A549 (cell line): ENCODE measurements at regions of chr4 and their contacts with region 1.

Region 1: DNA sequence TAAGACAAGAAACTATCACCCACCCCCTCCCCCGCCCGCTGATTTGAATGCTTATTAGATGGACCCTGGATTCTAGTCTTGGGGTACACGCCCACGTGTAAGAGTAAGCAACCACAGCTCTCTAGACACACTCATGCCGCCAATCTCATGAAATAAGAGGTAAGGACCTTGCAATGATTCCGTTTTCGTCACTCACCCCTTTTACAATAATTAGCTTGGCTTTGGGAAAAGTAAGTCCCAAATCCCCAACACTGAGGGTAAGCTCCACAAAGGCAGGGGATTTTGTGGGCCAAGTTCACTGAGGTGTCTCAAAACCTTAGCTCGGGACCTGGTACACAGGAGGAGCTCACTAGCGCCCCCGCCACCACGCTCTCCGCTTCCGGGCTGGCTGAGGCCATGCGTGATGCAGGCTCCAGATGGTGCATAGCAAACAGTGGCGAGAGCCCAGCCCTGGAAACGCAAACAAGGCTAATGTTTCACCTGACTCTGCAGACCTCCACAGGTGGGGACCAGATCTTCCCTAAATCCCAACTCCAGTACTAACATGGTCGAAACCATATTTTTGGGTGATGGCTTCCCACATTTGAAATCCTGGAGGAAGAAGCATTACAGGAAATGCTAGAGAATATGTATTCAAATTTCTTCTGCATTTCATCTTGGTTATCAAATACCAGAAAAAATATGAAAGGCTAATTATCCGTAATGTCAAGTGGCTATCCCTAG is 4.1 kb downstream of the PLAC8 start:
- DNase-seq: peak; percentile 56 to 90
- ATAC-seq: peak; percentile 95 to 97
- H3K4me3 ChIP-seq: peak overlapping the region; percentile 64
- H3K27ac ChIP-seq: peak overlapping the region; percentile 89 to 94
- H3K4me1 ChIP-seq: peaks cover 17% of the 10 kb centered on the region
- CTCF ChIP-seq: peak; percentile 61
- EP300 ChIP-seq: no peak
- POLR2A ChIP-seq: no peak
- RAD21 ChIP-seq: peak; percentile 47 to 54

Region 2: GRCh38 chr4:83097018-83097417 is 13.4 kb before region 1 on chr4:
- CTCF ChIA-PET with region 1: interaction called, 14 read pairs
- POLR2A ChIA-PET with region 1: no interaction called
- DNase-seq: no peak
- ATAC-seq: no peak
- H3K4me3 ChIP-seq: no peak overlapping the region
- H3K27ac ChIP-seq: no peak overlapping the region
- H3K4me1 ChIP-seq: peaks cover 14% of the 10 kb centered on the region; the same call in 2 of the 3 replicates
- CTCF ChIP-seq: no peak
- EP300 ChIP-seq: no peak
- POLR2A ChIP-seq: no peak
- RAD21 ChIP-seq: no peak

Region 3: GRCh38 chr4:83356899-83357661 is 246.7 kb after region 1 on chr4:
- CTCF ChIA-PET with region 1: no interaction called
- POLR2A ChIA-PET with region 1: no interaction called
- DNase-seq: peak in 1 of 2 experiments; percentile 45
- ATAC-seq: peak; percentile 54 to 73; a peak in 4 of 6 replicates
- H3K4me3 ChIP-seq: no peak overlapping the region
- H3K27ac ChIP-seq: peak overlapping the region; percentile 52 to 75; a peak in 5 of 6 replicates
- H3K4me1 ChIP-seq: peaks cover 27% of the 10 kb centered on the region
- CTCF ChIP-seq: no peak
- EP300 ChIP-seq: no peak
- POLR2A ChIP-seq: no peak
- RAD21 ChIP-seq: no peak

Region 4: GRCh38 chr4:83527671-83528070 is 417.3 kb after region 1 on chr4:
- CTCF ChIA-PET with region 1: no interaction called
- POLR2A ChIA-PET with region 1: no interaction called
- DNase-seq: no peak
- ATAC-seq: no peak
- H3K4me3 ChIP-seq: no peak overlapping the region
- H3K27ac ChIP-seq: no peak overlapping the region
- H3K4me1 ChIP-seq: no peaks in the 10 kb centered on the region
- CTCF ChIP-seq: no peak
- EP300 ChIP-seq: no peak
- POLR2A ChIP-seq: no peak
- RAD21 ChIP-seq: no peak